ENCODE measurements at regions of chr22 and their contacts with region 1.

Region 1: GRCh38 chr22:31749636-31750364 is at the start of gene PRR14L:
- DNase-seq: peak; percentile 99 to 100
- ATAC-seq: peak; percentile 95
- H3K4me3 ChIP-seq: peak within 1 kb of the TSS; percentile 78 to 87
- H3K27ac ChIP-seq: peak within 1 kb of the TSS; percentile 5 to 41
- H3K4me1 ChIP-seq: no peaks in the 10 kb centered on the region
- H3K27me3 ChIP-seq: no peaks in the 10 kb centered on the region
- total RNA-seq, gene PRR14L: 38.8 to 44.1 TPM

Region 2: DNA sequence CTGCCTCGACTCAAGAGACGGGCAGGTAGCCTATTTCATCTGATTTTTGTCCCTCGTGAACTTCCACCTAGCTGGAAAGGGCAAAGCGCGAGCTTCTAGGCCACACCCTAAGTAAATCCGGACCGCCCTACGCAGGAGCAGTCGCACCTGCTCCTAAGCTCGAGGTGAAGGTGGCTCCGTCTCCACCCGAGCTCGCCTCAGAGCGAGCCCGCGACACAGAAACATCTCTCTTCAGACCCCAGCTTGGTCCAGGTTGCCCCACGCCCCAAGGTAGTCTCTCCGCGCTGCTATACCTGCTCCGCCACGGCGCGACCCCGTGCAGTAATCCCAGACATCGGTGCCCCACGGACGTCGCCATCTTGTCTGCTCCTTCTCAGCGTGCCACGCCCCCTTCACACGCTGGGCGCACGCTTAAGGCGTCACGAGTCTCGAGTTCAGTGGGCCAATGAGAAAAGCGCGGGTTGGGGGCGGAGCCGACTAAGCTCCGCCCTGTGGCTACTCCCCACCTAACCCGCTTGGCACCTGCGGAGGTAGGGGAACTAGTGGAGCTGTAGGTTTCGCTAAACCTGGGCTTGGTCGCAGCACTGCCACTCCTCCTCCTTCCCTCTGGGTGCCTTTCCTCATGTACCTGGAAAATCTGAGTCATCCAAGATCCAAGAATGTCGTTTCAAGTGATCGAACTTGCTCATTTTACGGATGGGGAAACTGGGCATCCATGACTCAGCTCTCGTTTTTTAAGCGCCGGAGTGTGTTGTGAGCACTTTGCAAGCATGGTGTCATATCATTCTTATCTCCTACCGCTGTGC is 87.7 kb before region 1 on chr22 and contains the start of gene PISD:
- intact Hi-C with region 1: loop called (anchors 1 to 5 kb)
- DNase-seq: peak; percentile 97 to 98
- ATAC-seq: peak; percentile 98
- H3K4me3 ChIP-seq: peak within 1 kb of the TSS; percentile 56 to 75
- H3K27ac ChIP-seq: peak within 1 kb of the TSS in 1 of 2 donors; percentile 9
- H3K4me1 ChIP-seq: peaks cover 0 to 3% of the 10 kb centered on the region in 2 donors
- H3K27me3 ChIP-seq: no peaks in the 10 kb centered on the region
- total RNA-seq, gene PISD: 38.5 to 38.8 TPM

Region 3: DNA sequence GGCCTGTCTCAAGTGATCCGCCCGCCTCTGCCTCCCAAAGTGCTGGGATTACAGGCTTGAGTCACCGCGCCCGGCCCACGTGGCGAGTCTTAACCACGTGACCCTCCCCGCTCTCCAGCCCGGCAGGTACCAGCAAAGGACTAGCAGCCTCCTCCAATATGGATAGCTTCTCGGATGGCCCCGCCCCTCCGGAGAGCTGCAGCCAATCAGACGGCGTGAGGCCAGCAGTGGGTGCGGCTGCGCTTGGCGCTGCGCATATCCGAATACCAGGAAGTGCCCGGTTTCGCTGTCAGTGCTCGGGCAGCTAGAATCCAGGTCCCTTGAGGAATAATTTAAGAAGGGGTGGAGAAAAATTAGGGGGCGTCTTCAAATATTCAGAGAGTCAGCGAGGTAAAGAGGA is 73.1 kb before region 1 on chr22:
- intact Hi-C with region 1: loop called in 1 of 2 experiments (anchors 5 kb)
- DNase-seq: peak; percentile 98
- ATAC-seq: peak; percentile 96
- H3K4me3 ChIP-seq: no peak overlapping the region
- H3K27ac ChIP-seq: peak overlapping the region in 1 of 2 donors; percentile 41
- H3K4me1 ChIP-seq: peaks cover 0 to 5% of the 10 kb centered on the region in 2 donors
- H3K27me3 ChIP-seq: no peaks in the 10 kb centered on the region

Region 4: DNA sequence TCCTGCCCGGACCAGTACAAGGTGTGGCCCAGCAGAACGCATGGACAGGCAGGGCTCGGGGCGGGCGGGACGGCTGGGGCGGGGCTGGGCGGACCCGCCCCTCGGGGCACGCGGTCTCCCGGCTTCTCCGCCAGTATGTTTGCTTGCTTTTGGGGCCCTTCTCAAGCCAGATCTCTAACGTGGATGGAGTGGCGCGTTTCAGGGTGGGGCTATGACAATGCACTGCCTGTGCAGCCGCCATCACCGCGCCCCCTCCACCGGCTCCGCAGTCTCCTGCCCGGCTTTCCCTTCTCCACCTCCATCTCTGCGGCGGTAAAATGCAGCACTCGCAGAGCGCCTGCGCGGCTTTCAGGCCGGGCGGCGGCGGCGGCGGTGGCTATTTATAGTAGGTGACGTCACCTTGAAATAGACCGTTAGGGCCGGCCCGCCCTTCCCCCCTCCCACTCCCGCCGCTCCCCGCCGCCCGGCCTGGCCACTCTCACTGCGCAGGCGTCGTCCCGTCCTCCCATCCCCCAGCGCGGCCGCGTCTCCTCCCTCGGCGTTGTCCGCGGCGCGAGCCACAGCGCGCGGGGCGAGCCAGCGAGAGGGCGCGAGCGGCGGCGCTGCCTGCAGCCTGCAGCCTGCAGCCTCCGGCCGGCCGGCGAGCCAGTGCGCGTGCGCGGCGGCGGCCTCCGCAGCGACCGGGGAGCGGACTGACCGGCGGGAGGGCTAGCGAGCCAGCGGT is 194.3 kb after region 1 on chr22 and contains the start of gene YWHAH:
- intact Hi-C with region 1: loop called in 1 of 2 experiments (anchors 5 kb)
- DNase-seq: peak; percentile 97 to 99
- ATAC-seq: peak; percentile 97
- H3K4me3 ChIP-seq: peak within 1 kb of the TSS; percentile 68 to 93
- H3K27ac ChIP-seq: peak within 1 kb of the TSS; percentile 83 to 94
- H3K4me1 ChIP-seq: peaks cover 0 to 3% of the 10 kb centered on the region in 2 donors
- H3K27me3 ChIP-seq: no peaks in the 10 kb centered on the region
- total RNA-seq, gene YWHAH: 207 to 538 TPM